Gastrocnemius medialis (tissue), 4 donors: ENCODE measurements at regions of chr1 and their contacts with region 1.

Region 1: GRCh38 chr1:35930593-35931445 is at the start of gene AGO3:
- DNase-seq: peak; percentile 66 to 78
- ATAC-seq: peak; percentile 89 to 91
- H3K4me3 ChIP-seq: peak within 1 kb of the TSS; percentile 71 to 85 (median 81)
- H3K27ac ChIP-seq: peak within 1 kb of the TSS; percentile 90 to 97 (median 96)
- H3K4me1 ChIP-seq: peaks cover 16 to 24% of the 10 kb centered on the region in 2 donors
- H3K27me3 ChIP-seq: no peaks in the 10 kb centered on the region
- CTCF ChIP-seq: peak in 1 of 5 experiments; percentile 9
- POLR2A ChIP-seq: peak; percentile 85
- total RNA-seq, gene AGO3: 12.8 to 18.8 (median 13.6) TPM

Region 2: DNA sequence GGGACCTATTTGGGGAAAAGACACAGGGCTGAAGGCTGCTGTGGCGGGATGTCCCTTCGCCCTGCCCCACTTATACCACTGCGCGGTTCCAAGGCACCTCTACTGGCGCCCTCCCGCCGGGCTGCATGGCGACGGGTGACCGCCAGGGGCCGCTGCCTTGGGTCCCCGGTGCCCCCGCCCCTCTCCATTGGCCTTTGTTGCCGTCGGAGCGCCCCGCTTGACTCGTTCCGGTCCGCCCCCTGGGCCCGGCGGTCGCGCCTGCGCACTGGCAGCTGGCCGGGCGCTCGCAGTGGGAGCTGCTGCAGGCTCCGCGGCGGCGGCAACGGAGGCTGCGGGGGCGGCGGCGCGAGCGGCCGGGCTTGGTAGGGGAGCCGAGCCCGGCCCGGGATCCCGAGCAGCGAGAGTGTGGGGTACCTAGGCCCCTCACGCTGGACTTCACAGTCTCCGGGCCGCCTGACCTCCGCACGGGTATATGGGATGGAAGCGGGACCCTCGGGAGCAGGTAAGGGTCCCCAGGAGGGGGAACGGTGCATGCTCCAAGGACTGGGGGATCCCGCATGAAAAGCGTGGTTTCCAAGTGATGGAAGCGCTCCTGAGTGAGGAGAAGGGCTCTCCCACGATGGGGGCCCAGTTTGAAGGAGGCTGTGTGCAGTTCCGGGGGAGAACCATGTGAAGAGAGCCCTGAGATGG is 47.7 kb before region 1 on chr1 and contains the start of gene AGO1:
- in situ Hi-C with region 1: no loop called
- intact Hi-C with region 1: loop called (anchors 2 kb)
- DNase-seq: peak; percentile 85 to 92
- ATAC-seq: peak; percentile 87 to 94
- H3K4me3 ChIP-seq: peak within 1 kb of the TSS; percentile 78 to 98 (median 94)
- H3K27ac ChIP-seq: peak within 1 kb of the TSS; percentile 75 to 84 (median 75)
- H3K4me1 ChIP-seq: peaks cover 12 to 14% of the 10 kb centered on the region in 2 donors
- H3K27me3 ChIP-seq: no peaks in the 10 kb centered on the region
- CTCF ChIP-seq: peak; percentile 92 to 99 (median 97)
- POLR2A ChIP-seq: peak; percentile 76 to 77
- total RNA-seq, gene AGO1: 11.2 to 12.6 (median 12.4) TPM

Region 3: GRCh38 chr1:36088575-36089443 is 158.0 kb after region 1 on chr1 and contains the start of gene ADPRS:
- in situ Hi-C with region 1: no loop called
- intact Hi-C with region 1: loop called (anchors 2 kb)
- DNase-seq: peak; percentile 79 to 83
- ATAC-seq: peak; percentile 93 to 94
- H3K4me3 ChIP-seq: peak within 1 kb of the TSS; percentile 75 to 98 (median 90)
- H3K27ac ChIP-seq: peak within 1 kb of the TSS; percentile 78 to 96 (median 89)
- H3K4me1 ChIP-seq: peaks cover 16 to 32% of the 10 kb centered on the region in 2 donors
- H3K27me3 ChIP-seq: peaks cover 9 to 26% (median 23%) of the 10 kb centered on the region in 3 donors
- CTCF ChIP-seq: peak; percentile 98 to 99 (median 99)
- POLR2A ChIP-seq: peak; percentile 79 to 91
- total RNA-seq, gene ADPRS: 46.7 to 67.3 (median 54.0) TPM